Cardiac septum (tissue), 1 donor: ENCODE measurements at regions of chr2 and their contacts with region 1.

Region 1: DNA sequence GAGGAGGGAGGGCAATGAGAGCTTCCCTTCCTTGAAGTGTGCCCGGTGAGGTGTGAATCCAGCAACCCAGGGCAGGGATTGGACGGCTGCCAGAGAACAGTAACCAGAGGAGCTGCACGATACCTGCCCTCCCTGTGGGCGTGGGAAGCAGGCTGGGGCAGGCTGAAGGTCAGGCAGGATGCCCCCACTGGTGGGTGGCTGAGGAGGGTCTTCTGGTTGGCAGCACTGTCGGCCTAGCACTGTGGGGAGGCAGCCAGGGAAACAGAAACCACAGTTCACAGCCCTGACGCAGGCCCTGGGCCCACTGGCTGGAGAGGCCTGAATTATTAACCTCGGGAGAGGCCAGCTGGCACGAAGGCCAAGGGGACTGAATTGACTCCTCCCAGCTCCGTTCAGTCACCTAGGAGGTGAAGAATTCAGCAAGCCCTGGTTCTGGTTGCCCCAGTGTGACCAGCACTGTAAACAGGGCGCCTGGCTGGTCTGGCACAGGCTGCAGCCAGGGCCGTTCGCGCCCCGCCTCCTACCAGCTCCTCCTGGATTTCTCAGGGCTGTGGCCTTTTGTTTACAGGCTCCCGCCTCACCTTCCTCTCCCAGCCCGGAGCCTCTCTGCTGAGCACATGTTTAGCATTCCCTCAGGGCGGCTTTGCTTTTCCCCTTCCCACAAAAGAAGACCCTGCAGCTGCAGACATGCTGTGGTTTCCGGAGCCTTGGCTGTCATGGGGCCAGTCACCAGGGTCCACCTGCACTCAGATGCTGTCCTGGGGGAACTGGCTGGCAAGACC is 97.8 kb downstream of the B3GNT2 start:
- DNase-seq: no peak

Region 2: GRCh38 chr2:61910603-61911002 is 383.1 kb before region 1 on chr2:
- intact Hi-C with region 1: loop called (anchors 10 kb)
- DNase-seq: no peak

Region 3: DNA sequence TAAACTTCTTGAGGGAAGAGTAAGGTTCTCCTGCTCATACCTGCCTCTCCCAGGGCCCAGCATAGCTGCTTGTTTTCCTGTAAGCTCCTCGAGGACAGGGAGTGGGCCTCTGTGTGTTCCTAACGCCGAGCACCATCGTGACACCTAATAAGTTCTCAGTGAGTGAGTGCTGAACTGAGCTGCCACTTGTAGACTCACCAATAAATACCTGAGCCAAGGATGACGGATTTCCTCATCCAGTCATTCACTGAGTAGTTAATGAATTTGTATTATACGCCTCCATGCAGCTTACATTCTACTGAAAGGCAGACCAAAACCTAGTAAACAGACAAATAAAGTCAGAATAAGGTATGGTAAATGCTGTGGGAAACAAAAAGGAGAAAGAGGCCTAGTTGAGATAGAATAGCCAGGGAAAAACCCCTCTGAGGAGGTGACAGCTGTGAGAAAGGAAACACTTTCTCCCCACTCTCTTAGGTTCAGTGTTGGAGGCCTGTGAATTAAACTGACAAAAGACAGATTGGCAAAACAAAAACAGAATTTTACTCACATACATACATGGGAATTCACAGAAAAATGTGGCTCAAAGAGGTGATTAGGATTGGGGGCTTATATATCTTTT is 40.9 kb after region 1 on chr2:
- intact Hi-C with region 1: loop called (anchors 5 kb)
- DNase-seq: no peak